Activated CD4-positive, alpha-beta T cell treated with anti-CD3 and anti-CD28 coated beads, Interleukin-2, amount 10 ng/mL, durations not matched to agents 24 days and 14 days (primary cell): ENCODE measurements at regions of chr3 and their contacts with region 1.

Region 1: GRCh38 chr3:128680602-128681368 is 30.2 kb upstream of the RPN1 start:
- DNase-seq: peak; percentile 99
- H3K4me3 Mint-ChIP-seq: peak overlapping the region; percentile 93
- H3K27ac Mint-ChIP-seq: peak overlapping the region; percentile 99
- H3K4me1 Mint-ChIP-seq: peaks cover 23% of the 10 kb centered on the region
- H3K27me3 Mint-ChIP-seq: no peaks in the 10 kb centered on the region

Region 2: DNA sequence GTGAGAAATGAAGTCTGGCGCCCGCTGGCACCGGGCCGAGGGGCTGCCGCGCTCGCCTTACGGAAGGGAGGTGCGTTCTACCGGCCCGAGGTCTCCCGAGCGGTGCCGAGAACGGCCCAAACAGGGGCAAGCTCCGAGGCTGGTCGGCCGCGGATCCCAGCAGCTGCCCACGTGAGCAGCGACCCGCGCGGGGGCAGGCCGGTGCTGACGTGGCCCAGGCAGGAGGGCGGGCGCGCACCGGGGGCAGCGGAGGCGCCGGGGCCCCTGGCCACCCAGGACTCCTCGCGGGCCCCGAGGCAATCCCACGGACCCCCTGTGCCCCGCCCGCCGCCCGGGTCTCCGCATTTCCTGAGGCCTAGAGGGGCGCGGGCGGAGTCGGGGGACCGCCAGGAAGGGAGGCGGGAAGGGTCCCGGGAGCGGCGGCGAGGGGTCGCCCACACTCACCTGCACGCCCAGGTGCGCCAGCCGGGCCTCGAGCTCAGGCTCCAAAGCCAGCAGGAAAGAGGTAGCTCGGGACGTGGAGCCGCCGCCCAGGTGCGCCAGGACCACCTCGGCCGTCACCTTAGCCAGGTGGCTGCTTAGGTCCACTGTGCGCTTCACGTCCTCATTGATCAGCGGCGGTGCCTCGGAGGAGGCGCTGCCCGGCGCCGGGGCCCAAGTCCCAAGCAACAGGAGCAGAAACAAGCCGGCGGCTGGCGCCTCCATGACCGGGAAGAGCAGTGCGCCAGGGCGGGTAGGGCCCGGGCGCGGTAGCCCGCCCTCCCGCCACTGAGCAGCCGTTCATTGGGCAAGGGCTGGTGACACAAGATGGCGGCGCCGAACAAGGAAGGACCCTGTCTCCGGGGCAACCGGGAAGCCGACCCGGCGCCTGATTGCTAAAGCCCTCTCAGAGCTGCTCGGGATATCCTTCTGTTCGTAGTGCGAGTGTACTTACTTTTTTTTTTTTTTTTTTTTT is 30.4 kb before region 1 on chr3 and contains the start of gene RPN1:
- intact Hi-C with region 1: loop called (anchors 1 kb)
- DNase-seq: peak; percentile 98
- H3K4me3 Mint-ChIP-seq: peak within 1 kb of the TSS; percentile 88
- H3K27ac Mint-ChIP-seq: peak within 1 kb of the TSS; percentile 92
- H3K4me1 Mint-ChIP-seq: peaks cover 32% of the 10 kb centered on the region
- H3K27me3 Mint-ChIP-seq: no peaks in the 10 kb centered on the region
- total RNA-seq, gene RPN1: 192 and 194 TPM in 2 replicates

Region 3: DNA sequence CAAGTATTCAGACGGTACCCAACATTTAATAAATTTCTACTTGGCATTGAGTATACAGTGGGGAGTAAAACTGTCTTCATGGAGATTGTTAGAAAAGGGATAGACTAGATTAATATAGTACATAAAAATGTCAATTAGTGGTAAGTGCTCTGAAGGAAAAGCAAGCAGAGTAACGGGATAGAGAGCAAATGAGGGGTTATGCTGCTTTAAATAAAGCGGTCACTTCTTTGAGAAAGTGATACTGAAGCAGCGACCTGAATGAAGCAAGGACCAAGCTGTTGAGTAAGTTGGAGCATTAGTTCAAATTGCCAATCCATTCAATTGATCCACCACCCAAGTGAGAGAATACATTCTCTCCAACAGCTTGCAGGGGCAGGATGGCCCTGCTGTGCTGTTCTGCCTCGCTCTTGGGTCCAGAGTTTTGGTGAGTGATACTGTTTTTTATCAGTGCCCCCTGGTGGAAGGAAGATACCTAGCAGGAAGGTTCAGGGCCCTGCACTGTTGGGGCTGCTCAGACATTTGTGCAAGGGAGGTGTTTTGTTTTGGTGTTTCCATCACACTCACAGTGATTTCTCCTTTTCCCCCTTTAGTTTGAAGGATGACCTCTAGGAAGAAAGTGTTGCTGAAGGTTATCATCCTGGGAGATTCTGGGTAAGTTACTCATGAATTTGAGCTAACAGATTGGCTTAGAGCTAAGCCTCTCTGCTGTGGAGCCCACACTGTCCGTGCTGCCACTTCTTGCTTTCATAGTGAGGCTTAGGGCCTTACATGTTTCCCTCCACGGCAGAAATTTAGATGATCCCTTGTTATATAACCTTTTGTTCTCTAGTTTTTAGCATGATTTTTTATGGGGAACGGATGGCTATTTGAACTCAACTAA is 114.2 kb after region 1 on chr3:
- intact Hi-C with region 1: loop called (anchors 1 kb)
- DNase-seq: peak; percentile 91
- H3K4me3 Mint-ChIP-seq: peak overlapping the region; percentile 68
- H3K27ac Mint-ChIP-seq: peak overlapping the region; percentile 94
- H3K4me1 Mint-ChIP-seq: peaks cover 72% of the 10 kb centered on the region
- H3K27me3 Mint-ChIP-seq: no peaks in the 10 kb centered on the region

Region 4: DNA sequence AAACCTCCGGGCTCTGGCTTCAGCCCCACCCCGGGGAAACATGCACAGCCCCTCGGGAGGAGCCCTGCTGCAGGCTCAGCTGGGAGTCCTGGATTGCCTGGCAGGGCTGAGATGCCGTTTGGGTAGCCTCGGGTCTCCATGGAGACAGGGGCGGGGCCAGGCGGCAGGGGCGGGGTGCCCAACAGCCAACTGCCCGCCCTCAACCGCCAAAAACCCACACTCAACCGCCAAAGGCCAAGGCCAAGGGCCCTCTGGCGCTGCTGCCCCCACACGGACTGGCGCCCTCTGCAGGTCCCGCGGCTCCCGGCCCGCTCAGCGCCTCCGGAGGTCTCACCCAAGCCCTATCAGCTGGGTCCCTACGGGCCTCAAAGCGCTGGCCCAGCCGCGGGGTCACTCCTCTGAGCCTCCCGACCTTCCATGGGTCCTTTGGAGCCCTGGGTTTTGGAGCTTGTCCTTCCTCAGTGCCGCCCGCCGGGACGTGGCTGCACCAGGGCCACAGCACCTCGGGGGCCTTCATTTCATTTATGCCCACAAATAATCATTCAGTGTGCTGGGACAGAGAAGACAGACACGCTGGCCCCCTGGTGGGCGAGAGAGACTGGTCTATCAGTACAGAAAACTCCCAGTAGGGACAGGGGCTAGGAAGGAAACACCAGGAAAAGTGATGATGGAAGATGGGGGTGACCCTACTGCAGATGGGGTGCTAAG is 165.1 kb after region 1 on chr3:
- intact Hi-C with region 1: loop called (anchors 1 kb)
- DNase-seq: peak; percentile 94
- H3K4me3 Mint-ChIP-seq: peak overlapping the region; percentile 69
- H3K27ac Mint-ChIP-seq: peak overlapping the region; percentile 88
- H3K4me1 Mint-ChIP-seq: peaks cover 18% of the 10 kb centered on the region
- H3K27me3 Mint-ChIP-seq: no peaks in the 10 kb centered on the region